Activated CD4-positive, alpha-beta memory T cell treated with anti-CD3 and anti-CD28 coated beads, Interleukin-2, amount 10 ng/mL, durations not matched to agents 7 days and 5 days (primary cell): ENCODE measurements at regions of chr19 and their contacts with region 1.

Region 1: GRCh38 chr19:35468637-35469036 is 20.6 kb downstream of the FFAR2 start:
- DNase-seq: peak; percentile 77
- H3K4me3 Mint-ChIP-seq: no peak overlapping the region
- H3K27ac Mint-ChIP-seq: no peak overlapping the region
- H3K4me1 Mint-ChIP-seq: peaks cover 17% of the 10 kb centered on the region
- H3K27me3 Mint-ChIP-seq: peaks cover 6% of the 10 kb centered on the region

Region 2: DNA sequence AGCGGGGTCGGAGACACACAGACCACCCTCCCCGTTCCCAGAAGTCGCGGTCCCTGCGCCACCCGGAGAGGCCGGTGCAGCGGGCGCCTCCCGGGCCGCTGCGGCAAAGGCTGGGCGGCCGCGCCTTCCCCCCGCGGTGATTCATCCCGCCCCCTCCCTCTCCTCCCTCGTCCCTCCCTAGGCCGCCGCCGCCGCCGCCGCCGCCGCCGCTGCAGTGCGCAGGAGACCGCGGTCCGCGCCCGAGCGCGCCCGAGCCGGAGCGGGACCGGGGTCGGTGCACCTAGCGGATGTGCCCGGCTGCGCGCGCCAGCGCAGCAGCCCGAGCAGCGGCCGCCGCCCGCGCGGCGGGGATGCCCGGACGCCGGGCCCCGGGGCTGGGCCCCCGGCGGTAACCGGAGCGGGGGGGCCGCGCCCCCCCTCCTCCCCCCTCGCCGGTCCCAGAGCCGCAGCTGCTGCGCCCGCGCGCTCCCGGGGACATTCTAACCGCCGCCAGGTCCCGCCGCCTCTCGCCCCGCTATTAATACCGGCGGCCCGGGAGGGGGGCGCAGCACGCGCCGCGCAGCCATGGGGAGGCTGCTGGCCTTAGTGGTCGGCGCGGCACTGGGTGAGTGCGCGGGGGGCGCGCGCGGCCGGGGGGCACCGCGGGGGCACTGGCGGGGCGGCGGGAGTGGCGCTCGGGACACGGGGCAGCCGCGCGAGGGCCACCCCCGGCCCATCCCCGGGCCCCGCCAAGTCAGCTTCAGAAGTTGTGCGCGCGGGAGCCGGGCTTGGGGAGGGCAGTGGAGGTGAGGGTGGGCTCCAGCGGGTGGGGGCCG is 438.2 kb before region 1 on chr19 and contains the start of gene SCN1B:
- CTCF ChIA-PET with region 1: no interaction called
- POLR2A ChIA-PET with region 1: no interaction called
- DNase-seq: peak; percentile 66
- H3K4me3 Mint-ChIP-seq: peak within 1 kb of the TSS; percentile 51
- H3K27ac Mint-ChIP-seq: no peak within 1 kb of the TSS
- H3K4me1 Mint-ChIP-seq: peaks cover 8% of the 10 kb centered on the region
- H3K27me3 Mint-ChIP-seq: peaks cover 21% of the 10 kb centered on the region
- total RNA-seq, gene SCN1B: 0.43 to 0.50 TPM

Region 3: GRCh38 chr19:35330475-35330874 is 138.2 kb before region 1 on chr19:
- CTCF ChIA-PET with region 1: no interaction called
- POLR2A ChIA-PET with region 1: no interaction called
- DNase-seq: no peak
- H3K4me3 Mint-ChIP-seq: no peak overlapping the region
- H3K27ac Mint-ChIP-seq: no peak overlapping the region
- H3K4me1 Mint-ChIP-seq: peaks cover 13% of the 10 kb centered on the region
- H3K27me3 Mint-ChIP-seq: peaks cover 26% of the 10 kb centered on the region

Region 4: GRCh38 chr19:35347171-35347929 is 121.3 kb before region 1 on chr19 and contains the start of gene FFAR1:
- CTCF ChIA-PET with region 1: interaction called, 78 read pairs
- POLR2A ChIA-PET with region 1: interaction called, 12 read pairs
- DNase-seq: peak; percentile 41
- H3K4me3 Mint-ChIP-seq: peak within 1 kb of the TSS; percentile 6
- H3K27ac Mint-ChIP-seq: peak within 1 kb of the TSS; percentile 55
- H3K4me1 Mint-ChIP-seq: peaks cover 26% of the 10 kb centered on the region
- H3K27me3 Mint-ChIP-seq: peaks cover 43% of the 10 kb centered on the region
- total RNA-seq, gene FFAR1: not detected

Region 5: DNA sequence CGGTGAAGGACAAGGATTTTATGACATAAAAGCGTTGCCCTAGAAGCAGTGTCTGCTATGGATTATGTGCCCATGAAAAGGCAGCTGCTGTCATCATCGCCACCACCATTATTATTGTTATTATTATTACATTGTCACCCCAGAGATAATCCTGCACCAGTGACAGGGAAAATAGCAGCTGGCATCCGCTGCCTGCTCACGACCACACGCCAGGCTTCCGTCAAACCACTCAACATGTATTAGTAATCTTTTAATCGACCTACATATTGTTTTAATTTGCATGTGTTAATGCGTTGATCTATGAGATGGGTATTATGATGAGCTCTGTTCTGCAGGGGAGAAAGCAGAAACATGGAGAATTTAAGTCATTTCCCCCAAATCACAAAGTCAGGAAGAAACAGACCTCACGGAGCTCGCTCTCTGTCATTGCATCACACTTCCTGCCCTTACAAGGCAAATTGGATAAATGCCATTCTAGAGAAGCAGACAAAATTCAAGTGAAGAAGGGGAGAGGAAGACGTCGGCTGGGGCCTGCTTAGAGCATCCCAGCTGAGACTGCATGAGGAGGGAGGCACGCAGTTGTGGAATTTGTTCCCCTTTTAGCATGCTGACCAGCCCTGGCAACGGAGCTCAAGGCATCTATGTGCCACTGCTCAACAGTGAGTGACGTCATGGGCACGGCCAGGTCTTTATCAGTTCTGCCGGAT is 110.6 kb before region 1 on chr19 and contains the start of gene FFAR3:
- CTCF ChIA-PET with region 1: interaction called, 78 read pairs
- POLR2A ChIA-PET with region 1: interaction called, 12 read pairs
- DNase-seq: no peak
- H3K4me3 Mint-ChIP-seq: peak within 1 kb of the TSS; percentile 20
- H3K27ac Mint-ChIP-seq: peak within 1 kb of the TSS; percentile 0
- H3K4me1 Mint-ChIP-seq: peaks cover 14% of the 10 kb centered on the region
- H3K27me3 Mint-ChIP-seq: peaks cover 17% of the 10 kb centered on the region
- total RNA-seq, gene FFAR3: 0.63 to 0.78 TPM

Region 6: GRCh38 chr19:35495107-35496064 is 26.7 kb after region 1 on chr19:
- CTCF ChIA-PET with region 1: interaction called, 14 read pairs
- POLR2A ChIA-PET with region 1: no interaction called
- DNase-seq: peak; percentile 67
- H3K4me3 Mint-ChIP-seq: no peak overlapping the region
- H3K27ac Mint-ChIP-seq: no peak overlapping the region
- H3K4me1 Mint-ChIP-seq: peaks cover 1% of the 10 kb centered on the region
- H3K27me3 Mint-ChIP-seq: peaks cover 29% of the 10 kb centered on the region